Lower leg skin (tissue), 4 donors: ENCODE measurements at regions of chr5 and their contacts with region 1.

Region 1: GRCh38 chr5:126536874-126537273 is 58.1 kb downstream of the ALDH7A1 start:
- DNase-seq: no peak
- H3K4me3 ChIP-seq: no peak overlapping the region
- CTCF ChIP-seq: no peak
- POLR2A ChIP-seq: no peak

Region 2: DNA sequence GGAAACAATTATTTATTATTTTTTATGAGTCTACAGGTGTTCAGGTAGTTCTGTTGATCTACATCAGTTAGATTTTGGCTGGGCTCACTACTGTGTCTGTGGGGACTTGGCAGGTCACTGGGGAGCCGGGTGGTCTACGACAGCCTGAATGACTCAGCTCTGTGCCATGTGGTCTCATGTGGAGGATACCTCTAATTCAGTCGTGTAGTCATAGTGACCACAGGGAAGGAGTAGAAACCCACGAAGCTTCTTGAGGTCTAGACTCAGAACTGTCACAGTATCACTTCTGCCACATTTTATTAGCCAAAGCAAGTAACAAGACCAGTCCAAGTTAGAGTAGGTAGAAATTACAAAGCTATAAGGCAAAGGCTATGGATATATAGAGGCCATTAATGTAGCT is 178.3 kb before region 1 on chr5:
- intact Hi-C with region 1: loop called (anchors 5 kb)
- DNase-seq: no peak
- H3K4me3 ChIP-seq: no peak overlapping the region
- CTCF ChIP-seq: no peak
- POLR2A ChIP-seq: no peak

Region 3: DNA sequence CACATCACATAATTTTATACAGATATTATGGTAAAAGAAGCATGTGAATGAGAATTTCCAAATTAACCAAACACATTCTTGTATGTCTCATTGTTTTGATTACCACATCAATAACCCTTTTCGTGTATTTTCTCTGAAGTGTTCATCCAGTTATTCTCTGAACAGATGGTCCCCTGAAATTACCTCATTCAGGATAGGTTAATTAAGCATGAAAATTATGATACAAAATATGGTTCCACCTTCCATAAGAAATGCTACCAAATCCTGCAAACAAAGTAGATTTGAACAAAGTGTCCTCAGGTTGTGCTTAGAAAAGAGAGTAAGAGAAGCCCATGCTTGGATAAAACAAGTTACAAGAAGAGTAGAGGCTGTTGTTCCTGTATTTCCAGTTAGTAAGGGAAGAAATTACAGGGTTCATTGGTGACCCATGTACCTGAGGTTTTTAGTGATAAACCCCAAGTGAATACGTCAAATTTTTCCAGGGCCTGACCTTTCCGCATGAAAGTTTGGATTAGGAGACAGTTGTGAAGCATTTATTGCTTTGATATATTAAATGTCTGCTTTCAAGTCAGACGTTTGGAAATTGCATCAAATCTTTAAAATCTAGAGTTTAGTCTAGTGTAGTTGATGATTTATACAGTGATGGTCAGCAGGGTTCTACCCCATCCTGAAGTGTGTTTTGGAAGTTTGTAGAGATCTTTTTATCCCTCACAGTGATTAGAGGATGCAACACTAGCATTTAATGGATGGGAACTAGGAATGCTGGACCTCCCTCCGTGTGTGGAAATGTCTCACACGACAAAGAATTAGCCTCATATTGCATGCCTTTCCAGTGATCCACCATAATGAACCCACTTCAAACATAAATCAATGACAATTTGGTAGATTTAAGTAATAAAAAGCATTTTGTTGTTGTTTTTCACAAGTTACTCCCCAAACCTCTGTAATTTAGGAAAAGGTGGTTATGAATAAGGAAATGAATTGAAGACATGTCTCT is 157.2 kb after region 1 on chr5:
- intact Hi-C with region 1: no loop called
- DNase-seq: no peak
- H3K4me3 ChIP-seq: no peak overlapping the region
- CTCF ChIP-seq: no peak
- POLR2A ChIP-seq: no peak